GM23248 (cell line): ENCODE measurements at regions of chr2 and their contacts with region 1.

Region 1: DNA sequence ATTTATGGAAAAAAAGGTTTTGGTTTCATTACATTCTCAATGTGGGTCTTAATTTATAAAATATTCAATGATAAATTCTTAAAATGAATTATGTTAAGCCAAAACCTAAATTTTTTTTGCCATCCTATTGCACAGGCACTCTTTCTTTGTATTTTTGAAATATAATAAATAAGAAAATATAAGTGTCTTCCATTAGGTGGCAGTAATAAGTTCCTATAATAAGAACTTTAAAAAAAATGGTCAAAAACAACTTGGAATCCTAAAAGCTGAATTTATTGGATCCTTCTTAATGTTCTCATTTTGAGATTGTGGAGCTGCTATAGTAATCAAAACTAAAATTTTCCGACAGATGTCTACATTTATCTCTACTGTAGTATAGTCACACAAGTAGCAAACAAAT is 5.7 kb downstream of the CALCRL start:
- DNase-seq: peak; percentile 53
- H3K4me3 ChIP-seq: no peak overlapping the region
- H3K27ac ChIP-seq: no peak overlapping the region
- H3K4me1 ChIP-seq: peaks cover 11% of the 10 kb centered on the region
- H3K27me3 ChIP-seq: no peaks in the 10 kb centered on the region

Region 2: DNA sequence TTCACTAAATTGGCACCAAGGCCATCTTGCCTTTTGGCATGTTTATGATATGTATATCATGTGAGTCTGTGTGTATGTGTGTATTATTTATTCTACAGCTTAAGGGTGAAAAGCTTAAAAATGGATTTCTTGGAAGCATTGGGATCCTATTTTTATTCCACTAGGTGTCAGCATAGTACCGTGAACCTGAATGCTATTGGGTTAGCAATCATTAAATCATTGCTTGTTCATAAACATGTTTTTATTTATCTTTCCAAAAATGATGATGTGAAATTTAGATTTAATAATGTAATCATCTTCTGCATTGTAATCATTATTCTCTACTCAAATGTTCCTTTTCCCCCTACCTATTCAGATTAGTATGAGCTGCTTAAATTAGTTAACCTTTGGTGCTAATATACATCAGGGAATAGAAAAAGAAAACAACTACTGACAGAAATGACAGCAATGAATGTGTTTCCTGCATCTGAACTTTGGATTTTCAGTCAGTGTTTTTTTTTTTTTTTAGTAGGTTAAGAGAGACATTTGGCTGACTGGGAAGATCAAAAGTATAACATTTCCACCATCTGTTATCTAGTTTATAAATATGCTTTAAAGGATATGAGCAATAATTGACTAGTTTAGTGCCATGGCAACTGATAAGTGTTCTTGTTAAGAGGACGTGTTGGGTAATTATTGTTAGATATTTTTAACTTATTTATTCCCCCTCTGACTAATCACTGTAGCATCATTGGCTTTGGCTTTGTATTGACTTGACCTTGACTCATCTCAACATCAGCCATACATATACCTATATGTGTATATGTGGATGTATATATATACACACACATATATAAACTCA is 579.3 kb before region 1 on chr2:
- in situ Hi-C with region 1: loop called (anchors 10 kb)
- DNase-seq: peak; percentile 59
- H3K4me3 ChIP-seq: no peak overlapping the region
- H3K27ac ChIP-seq: no peak overlapping the region
- H3K4me1 ChIP-seq: no peaks in the 10 kb centered on the region
- H3K27me3 ChIP-seq: no peaks in the 10 kb centered on the region